A673 (cell line): ENCODE measurements at regions of chr2 and their contacts with region 1.

Region 1: DNA sequence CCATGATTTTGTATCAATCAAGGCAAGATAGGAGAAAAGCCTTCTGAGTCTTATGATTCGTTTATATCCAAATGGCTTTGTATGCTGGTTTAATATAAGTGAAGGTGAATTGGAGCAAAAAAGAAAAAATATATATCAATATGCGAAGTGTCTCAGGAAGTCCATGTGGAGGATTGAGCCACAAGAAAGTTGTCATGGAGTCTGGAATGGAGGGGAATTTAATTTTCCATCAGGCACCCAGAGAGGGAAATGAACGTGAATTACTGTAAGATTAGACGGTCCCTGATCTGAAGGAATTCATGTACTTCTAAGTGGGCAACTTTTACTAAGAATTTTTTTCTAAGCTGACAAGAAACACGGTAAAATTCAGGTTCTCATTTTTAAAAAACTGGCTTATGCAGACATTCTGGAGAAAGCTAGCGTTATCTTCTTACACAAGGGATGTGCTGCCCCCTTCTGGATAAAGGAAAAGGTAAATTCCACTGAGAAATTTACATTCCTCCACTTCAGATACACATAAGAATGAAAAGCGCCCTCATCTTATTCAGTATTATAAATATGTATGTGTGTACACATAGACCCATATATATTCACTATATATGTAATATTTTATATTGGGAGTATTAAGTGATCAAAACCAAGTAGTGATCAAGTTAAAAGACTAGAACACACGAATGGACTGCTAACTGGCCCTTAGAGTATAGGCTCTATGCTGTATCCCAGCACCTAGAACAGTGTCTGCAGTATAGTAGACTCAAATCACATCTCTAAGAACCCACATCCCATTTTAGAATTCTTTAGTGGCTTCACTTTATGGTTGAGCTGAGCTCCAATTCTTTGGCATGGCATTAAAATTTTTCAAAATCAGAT is 289.0 kb upstream of the TFPI start:
- DNase-seq: peak; percentile 76
- H3K4me3 ChIP-seq: no peak overlapping the region
- H3K27ac ChIP-seq: no peak overlapping the region
- H3K4me1 ChIP-seq: no peaks in the 10 kb centered on the region
- H3K27me3 ChIP-seq: no peaks in the 10 kb centered on the region
- CTCF ChIP-seq: peak; percentile 74

Region 2: GRCh38 chr2:186862869-186863709 is 980.1 kb before region 1 on chr2:
- CTCF ChIA-PET with region 1: no interaction called
- POLR2A ChIA-PET with region 1: no interaction called
- intact Hi-C with region 1: loop called (anchors 10 kb)
- DNase-seq: peak; percentile 62
- H3K4me3 ChIP-seq: no peak overlapping the region
- H3K27ac ChIP-seq: no peak overlapping the region
- H3K4me1 ChIP-seq: no peaks in the 10 kb centered on the region
- H3K27me3 ChIP-seq: no peaks in the 10 kb centered on the region
- CTCF ChIP-seq: peak; percentile 79

Region 3: DNA sequence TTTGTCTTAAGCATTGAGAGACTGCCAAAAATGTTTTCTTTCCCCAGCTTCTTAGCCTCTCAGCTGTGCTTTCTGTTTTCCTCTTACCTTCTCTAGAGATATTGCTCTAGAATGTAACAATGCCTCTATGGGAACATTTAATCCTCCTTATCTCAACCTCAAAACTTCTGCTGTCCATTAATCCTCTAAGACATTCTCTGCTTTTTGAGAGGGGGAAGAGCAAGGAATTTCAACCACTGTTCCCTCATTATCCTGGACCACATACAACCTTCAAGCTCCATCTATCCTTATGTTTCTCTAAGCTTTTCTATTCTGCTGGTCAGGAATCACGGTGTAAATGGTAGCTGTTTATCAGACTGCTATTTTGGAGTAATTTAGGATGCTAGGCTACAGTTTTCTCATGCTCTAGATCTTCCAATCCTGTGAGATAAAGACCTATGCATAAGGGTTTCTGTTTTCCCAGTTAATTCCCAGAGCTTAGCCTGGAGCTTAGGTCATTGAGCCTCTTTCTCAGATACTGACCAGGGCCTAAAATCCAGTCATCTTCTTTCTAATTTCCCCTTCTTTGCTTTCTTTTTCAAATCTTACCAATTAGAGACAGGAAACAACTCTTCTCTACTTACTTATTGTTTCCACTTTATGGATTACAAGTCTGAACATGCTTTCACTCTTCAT is 677.1 kb before region 1 on chr2:
- CTCF ChIA-PET with region 1: no interaction called
- POLR2A ChIA-PET with region 1: no interaction called
- intact Hi-C with region 1: no loop called
- DNase-seq: peak; percentile 12
- H3K4me3 ChIP-seq: no peak overlapping the region
- H3K27ac ChIP-seq: no peak overlapping the region
- H3K4me1 ChIP-seq: peaks cover 20% of the 10 kb centered on the region
- H3K27me3 ChIP-seq: no peaks in the 10 kb centered on the region
- CTCF ChIP-seq: no peak

Region 4: GRCh38 chr2:187499941-187500532 is 343.2 kb before region 1 on chr2:
- CTCF ChIA-PET with region 1: interaction called, 8 read pairs
- POLR2A ChIA-PET with region 1: no interaction called
- intact Hi-C with region 1: loop called (anchors 1 kb)
- DNase-seq: peak; percentile 80
- H3K4me3 ChIP-seq: no peak overlapping the region
- H3K27ac ChIP-seq: no peak overlapping the region
- H3K4me1 ChIP-seq: peaks cover 47% of the 10 kb centered on the region
- H3K27me3 ChIP-seq: no peaks in the 10 kb centered on the region
- CTCF ChIP-seq: peak; percentile 85

Region 5: GRCh38 chr2:187581125-187581896 is 261.9 kb before region 1 on chr2:
- CTCF ChIA-PET with region 1: interaction called, 11 read pairs
- POLR2A ChIA-PET with region 1: no interaction called
- intact Hi-C with region 1: loop called (anchors 1 kb)
- DNase-seq: peak; percentile 79
- H3K4me3 ChIP-seq: peak overlapping the region; percentile 28
- H3K27ac ChIP-seq: no peak overlapping the region
- H3K4me1 ChIP-seq: peaks cover 24% of the 10 kb centered on the region
- H3K27me3 ChIP-seq: no peaks in the 10 kb centered on the region
- CTCF ChIP-seq: peak; percentile 77

Region 6: DNA sequence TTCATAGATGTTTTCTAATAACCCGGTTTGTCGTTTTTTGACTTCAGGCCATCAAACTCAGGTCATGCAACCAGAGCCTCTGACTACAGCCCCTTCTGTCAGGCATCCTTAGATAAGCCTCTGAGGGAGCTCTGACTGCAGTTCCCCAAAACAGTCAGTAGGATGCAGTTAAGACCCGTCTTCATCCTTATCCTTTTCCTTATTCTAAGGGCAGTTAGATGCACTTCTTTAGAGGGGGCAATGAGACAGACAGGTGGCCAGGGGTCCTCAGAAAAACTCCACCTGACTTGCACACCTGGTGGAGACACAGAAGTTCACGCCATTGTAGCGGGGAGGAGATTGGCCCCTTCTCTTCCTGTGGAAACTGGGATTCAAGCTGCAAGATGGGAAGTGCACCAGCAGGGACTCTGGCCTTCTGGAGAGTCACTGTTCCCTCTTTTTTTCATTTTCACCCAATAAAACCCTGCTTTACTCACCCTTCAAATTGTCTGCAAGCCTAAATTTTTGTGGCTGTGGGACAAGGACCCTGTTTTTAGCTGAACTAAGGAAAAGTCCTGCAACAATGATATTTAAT is 184.2 kb before region 1 on chr2:
- CTCF ChIA-PET with region 1: no interaction called
- POLR2A ChIA-PET with region 1: no interaction called
- intact Hi-C with region 1: loop called (anchors 10 kb)
- DNase-seq: peak; percentile 52
- H3K4me3 ChIP-seq: no peak overlapping the region
- H3K27ac ChIP-seq: no peak overlapping the region
- H3K4me1 ChIP-seq: no peaks in the 10 kb centered on the region
- H3K27me3 ChIP-seq: no peaks in the 10 kb centered on the region
- CTCF ChIP-seq: peak; percentile 55

Region 7: GRCh38 chr2:187855689-187856088 is 12.5 kb after region 1 on chr2:
- CTCF ChIA-PET with region 1: interaction called, 11 read pairs
- POLR2A ChIA-PET with region 1: no interaction called
- intact Hi-C with region 1: no loop called
- DNase-seq: no peak
- H3K4me3 ChIP-seq: no peak overlapping the region
- H3K27ac ChIP-seq: no peak overlapping the region
- H3K4me1 ChIP-seq: no peaks in the 10 kb centered on the region
- H3K27me3 ChIP-seq: no peaks in the 10 kb centered on the region
- CTCF ChIP-seq: no peak

Region 8: DNA sequence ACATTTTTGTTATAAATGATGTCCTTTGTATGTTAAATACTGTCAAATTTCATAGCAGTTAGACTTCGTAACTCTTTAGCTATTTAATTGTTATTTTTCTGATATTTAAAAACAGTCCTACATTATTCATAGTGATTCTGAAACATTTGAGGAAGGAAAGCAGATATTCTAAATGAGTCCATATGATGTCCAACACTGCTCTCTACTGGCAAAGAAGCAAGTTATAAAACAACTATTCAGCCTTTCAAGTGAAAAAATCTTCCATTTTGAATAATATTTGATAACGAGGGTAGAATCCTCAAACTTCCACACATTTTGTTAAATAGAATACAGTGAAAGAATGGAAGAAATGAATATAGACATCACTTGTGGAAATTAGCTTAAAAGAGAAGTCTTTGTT is 669.2 kb after region 1 on chr2:
- CTCF ChIA-PET with region 1: no interaction called
- POLR2A ChIA-PET with region 1: no interaction called
- intact Hi-C with region 1: loop called (anchors 5 kb)
- DNase-seq: peak; percentile 78
- H3K4me3 ChIP-seq: no peak overlapping the region
- H3K27ac ChIP-seq: no peak overlapping the region
- H3K4me1 ChIP-seq: peaks cover 8% of the 10 kb centered on the region
- H3K27me3 ChIP-seq: no peaks in the 10 kb centered on the region
- CTCF ChIP-seq: peak; percentile 71